ENCODE measurements at regions of chr16 and their contacts with region 1.

Region 1: DNA sequence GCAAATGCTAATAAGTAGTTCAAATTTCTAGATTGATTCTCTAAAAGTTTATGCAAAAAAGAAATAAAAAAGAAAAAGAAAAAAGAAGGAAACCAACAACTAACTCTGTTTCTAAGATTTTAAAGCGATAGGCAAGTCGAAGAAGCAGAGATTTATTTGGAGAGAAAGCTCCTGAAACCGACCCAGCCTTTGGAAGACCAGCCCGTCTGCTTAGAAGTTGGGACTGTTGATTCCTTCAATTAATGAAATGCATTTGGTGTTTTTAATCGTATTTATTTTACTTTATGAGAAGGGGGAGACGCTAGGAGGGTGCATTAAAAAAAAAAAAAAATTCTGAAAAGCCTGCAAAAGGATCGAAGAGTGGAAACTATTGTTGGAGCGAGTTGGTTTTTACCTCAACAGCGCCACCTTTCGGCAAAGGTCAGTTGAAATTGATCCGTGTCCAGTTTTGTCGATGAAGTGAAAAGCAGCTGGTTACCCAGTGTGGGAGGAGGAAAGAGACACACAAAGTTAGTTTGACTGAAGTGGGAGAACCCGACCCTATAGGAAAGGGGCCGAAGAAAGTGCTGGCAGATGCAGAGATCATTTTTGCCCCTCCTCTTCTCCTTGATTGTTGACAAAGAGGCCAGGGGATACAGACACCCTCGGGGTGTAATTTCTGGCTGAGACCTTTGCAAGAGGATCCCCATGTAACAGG is 1.5 kb upstream of the MAF start:
- DNase-seq: peak; percentile 92
- H3K4me3 Mint-ChIP-seq: peak overlapping the region; percentile 97
- H3K27ac Mint-ChIP-seq: peak overlapping the region; percentile 100
- H3K4me1 Mint-ChIP-seq: peaks cover 37% of the 10 kb centered on the region
- H3K27me3 Mint-ChIP-seq: no peaks in the 10 kb centered on the region

Region 2: DNA sequence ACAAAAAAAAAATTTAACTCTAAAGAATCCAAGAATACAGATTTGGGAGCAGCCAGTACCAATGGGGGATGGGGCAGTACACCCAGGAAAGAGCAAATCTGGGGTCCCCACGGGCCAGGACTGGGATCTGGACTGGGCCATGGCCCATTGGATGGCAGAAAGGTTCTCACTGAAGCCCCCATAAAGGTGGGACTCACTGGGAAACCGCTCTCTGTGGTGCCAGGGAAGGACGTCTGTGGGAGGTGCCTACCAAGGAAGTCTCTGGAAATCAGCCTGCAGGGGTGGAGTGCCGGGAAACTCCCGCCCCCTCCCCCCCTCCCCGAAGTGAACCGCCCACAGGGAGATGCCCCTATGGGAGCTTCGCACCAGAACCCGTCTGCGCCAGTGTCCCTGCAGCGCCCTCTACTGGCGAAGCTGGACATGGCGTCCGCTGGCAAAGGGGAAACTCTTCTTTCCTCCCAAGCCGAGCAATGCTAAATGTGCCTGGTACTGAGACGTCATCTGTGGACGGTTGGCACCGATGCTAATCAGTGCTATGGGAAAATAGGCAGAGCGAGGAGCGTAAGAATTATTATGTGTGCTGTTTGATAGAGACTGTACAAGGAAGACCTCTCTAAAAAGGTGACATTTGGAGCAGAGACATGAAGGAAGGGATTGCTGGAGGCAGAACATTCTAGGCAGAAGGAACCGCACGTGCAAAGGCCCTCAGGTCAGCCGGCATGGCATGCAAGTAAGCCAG is 831.6 kb before region 1 on chr16:
- CTCF ChIA-PET with region 1: interaction called, 5 read pairs
- POLR2A ChIA-PET with region 1: interaction called, 149 read pairs
- DNase-seq: peak; percentile 88
- H3K4me3 Mint-ChIP-seq: no peak overlapping the region
- H3K27ac Mint-ChIP-seq: peak overlapping the region; percentile 29
- H3K4me1 Mint-ChIP-seq: peaks cover 74% of the 10 kb centered on the region
- H3K27me3 Mint-ChIP-seq: no peaks in the 10 kb centered on the region

Region 3: GRCh38 chr16:78892951-78893733 is 708.9 kb before region 1 on chr16:
- CTCF ChIA-PET with region 1: interaction called, 4 read pairs
- POLR2A ChIA-PET with region 1: interaction called, 89 read pairs
- DNase-seq: no peak
- H3K4me3 Mint-ChIP-seq: no peak overlapping the region
- H3K27ac Mint-ChIP-seq: peak overlapping the region; percentile 85
- H3K4me1 Mint-ChIP-seq: peaks cover 91% of the 10 kb centered on the region
- H3K27me3 Mint-ChIP-seq: no peaks in the 10 kb centered on the region

Region 4: GRCh38 chr16:79269211-79269863 is 332.7 kb before region 1 on chr16:
- CTCF ChIA-PET with region 1: interaction called, 4 read pairs
- POLR2A ChIA-PET with region 1: interaction called, 71 read pairs
- DNase-seq: peak; percentile 75
- H3K4me3 Mint-ChIP-seq: peak overlapping the region; percentile 52
- H3K27ac Mint-ChIP-seq: peak overlapping the region; percentile 89
- H3K4me1 Mint-ChIP-seq: peaks cover 90% of the 10 kb centered on the region
- H3K27me3 Mint-ChIP-seq: no peaks in the 10 kb centered on the region

Region 5: DNA sequence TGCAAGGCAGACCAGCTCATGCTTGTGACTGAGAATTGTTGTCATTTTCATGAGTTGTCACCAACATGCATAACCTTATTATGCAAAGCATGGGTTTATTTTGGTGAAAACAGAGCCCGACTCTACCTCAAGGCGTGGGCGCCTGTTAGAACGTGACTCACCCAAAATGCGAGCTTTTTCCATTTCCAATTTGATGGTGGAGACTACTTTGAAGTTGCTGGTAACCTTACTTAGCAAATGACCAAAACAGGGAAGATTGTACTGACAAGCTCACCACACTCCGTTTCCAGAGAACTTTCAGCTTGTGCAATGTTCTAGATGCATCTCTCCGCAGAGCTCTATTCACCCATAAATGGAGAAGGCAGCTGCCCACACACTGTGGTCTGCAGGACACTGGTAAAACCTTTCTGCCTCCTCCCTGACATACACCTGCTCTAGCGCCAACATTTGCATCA is 286.0 kb before region 1 on chr16:
- CTCF ChIA-PET with region 1: no interaction called
- POLR2A ChIA-PET with region 1: interaction called, 10 read pairs
- DNase-seq: peak; percentile 66
- H3K4me3 Mint-ChIP-seq: peak overlapping the region; percentile 15
- H3K27ac Mint-ChIP-seq: peak overlapping the region; percentile 84
- H3K4me1 Mint-ChIP-seq: peaks cover 35% of the 10 kb centered on the region
- H3K27me3 Mint-ChIP-seq: no peaks in the 10 kb centered on the region

Region 6: GRCh38 chr16:79542237-79542774 is 59.8 kb before region 1 on chr16:
- CTCF ChIA-PET with region 1: no interaction called
- POLR2A ChIA-PET with region 1: no interaction called
- DNase-seq: no peak
- H3K4me3 Mint-ChIP-seq: no peak overlapping the region
- H3K27ac Mint-ChIP-seq: no peak overlapping the region
- H3K4me1 Mint-ChIP-seq: no peaks in the 10 kb centered on the region
- H3K27me3 Mint-ChIP-seq: peaks cover 9% of the 10 kb centered on the region

Region 7: GRCh38 chr16:79618692-79619050 is 16.6 kb after region 1 on chr16:
- CTCF ChIA-PET with region 1: interaction called, 17 read pairs
- POLR2A ChIA-PET with region 1: interaction called, 97 read pairs
- DNase-seq: peak; percentile 65
- H3K4me3 Mint-ChIP-seq: peak overlapping the region; percentile 53
- H3K27ac Mint-ChIP-seq: peak overlapping the region; percentile 98
- H3K4me1 Mint-ChIP-seq: peaks cover 76% of the 10 kb centered on the region
- H3K27me3 Mint-ChIP-seq: peaks cover 9% of the 10 kb centered on the region

Region 8: GRCh38 chr16:79717333-79718137 is 115.5 kb after region 1 on chr16:
- CTCF ChIA-PET with region 1: no interaction called
- POLR2A ChIA-PET with region 1: interaction called, 67 read pairs
- DNase-seq: no peak
- H3K4me3 Mint-ChIP-seq: peak overlapping the region; percentile 36
- H3K27ac Mint-ChIP-seq: peak overlapping the region; percentile 76
- H3K4me1 Mint-ChIP-seq: peaks cover 48% of the 10 kb centered on the region
- H3K27me3 Mint-ChIP-seq: no peaks in the 10 kb centered on the region